ENCODE measurements at regions of chr5 and their contacts with region 1.

Region 1: DNA sequence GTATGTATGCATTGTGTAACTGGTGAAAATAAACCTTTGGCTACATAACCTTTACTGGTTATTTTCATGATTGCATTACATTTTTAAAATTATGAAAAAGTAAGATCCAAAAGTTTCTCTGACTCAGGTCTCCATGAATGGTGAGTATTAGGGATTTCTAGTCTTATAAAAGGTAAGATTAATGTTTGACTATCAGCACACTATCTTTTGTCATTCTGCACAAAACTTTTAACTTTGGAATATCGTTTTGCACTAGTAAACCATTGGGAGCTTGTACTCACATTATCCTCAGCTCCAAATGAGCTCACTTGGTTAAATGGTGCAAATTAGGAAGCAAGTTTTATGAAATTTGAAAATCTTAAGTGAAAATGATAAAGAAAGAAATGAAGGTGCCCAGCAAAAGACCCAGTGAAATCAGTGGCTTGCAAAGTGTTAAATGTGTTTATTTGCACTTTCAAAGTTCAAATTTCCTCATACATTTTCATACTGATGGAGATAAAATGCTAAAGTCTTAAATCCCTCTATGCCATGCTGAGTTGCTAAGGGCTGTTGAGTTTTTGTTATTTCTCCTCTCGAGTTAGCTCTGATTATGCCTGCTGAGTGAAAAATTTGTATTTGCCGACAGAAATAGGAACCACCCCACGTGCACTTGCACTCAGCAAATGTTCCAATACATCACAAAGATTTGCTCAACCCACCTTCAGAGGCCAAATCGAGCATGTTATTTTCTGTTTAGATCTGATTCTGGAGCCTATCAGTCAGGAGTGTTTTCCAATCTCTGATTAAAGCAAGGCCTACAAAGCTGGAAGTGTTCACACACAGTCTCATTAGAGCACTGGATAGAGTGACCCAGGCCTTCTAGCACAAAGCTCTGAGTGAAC is 885.7 kb downstream of the NR2F1-AS1 start:
- DNase-seq: no peak

Region 2: GRCh38 chr5:93249651-93250289 is 554.4 kb after region 1 on chr5:
- intact Hi-C with region 1: loop called in 1 of 2 experiments (anchors 10 kb)
- DNase-seq: peak; percentile 79

Region 3: DNA sequence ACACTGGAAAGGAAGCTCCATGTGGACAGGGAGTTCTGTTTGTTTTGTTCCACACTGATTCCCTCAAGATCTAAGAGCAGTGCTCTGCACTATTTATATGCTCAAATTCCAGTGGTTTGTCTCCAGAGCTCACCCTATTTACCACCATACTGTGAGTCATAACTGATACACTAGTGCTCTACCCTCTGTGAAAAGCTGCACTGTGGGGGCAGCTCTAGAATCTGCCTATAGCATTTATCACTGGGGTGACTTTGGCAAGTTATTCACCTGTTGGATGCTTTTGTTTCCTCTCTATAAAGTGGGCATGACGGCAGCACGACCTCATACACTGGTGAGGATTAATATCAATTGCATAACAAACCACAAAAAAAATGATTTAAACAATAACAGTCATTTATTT is 577.8 kb after region 1 on chr5:
- intact Hi-C with region 1: loop called in 1 of 2 experiments (anchors 5 kb)
- DNase-seq: no peak

Measured in posterior vena cava (tissue), 2 donors.